Cardiac septum (tissue), 1 donor: ENCODE measurements at regions of chr16 and their contacts with region 1.

Region 1: GRCh38 chr16:11164482-11165270 is 91.3 kb downstream of the SOCS1 start:
- DNase-seq: no peak

Region 2: GRCh38 chr16:11100239-11100750 is 64.4 kb before region 1 on chr16:
- intact Hi-C with region 1: loop called (anchors 5 kb)
- DNase-seq: no peak

Region 3: GRCh38 chr16:11139326-11140097 is 25.2 kb before region 1 on chr16:
- intact Hi-C with region 1: loop called (anchors 2 kb)
- DNase-seq: no peak

Region 4: GRCh38 chr16:11240636-11241473 is 76.2 kb after region 1 on chr16:
- intact Hi-C with region 1: loop called (anchors 5 kb)
- DNase-seq: no peak